AG04449 (cell line): ENCODE measurements at regions of chr1 and their contacts with region 1.

Region 1: GRCh38 chr1:26417111-26417759 is 6.6 kb downstream of the LIN28A start:
- DNase-seq: no peak
- H3K4me3 ChIP-seq: no peak overlapping the region
- CTCF ChIP-seq: peak; percentile 97

Region 2: DNA sequence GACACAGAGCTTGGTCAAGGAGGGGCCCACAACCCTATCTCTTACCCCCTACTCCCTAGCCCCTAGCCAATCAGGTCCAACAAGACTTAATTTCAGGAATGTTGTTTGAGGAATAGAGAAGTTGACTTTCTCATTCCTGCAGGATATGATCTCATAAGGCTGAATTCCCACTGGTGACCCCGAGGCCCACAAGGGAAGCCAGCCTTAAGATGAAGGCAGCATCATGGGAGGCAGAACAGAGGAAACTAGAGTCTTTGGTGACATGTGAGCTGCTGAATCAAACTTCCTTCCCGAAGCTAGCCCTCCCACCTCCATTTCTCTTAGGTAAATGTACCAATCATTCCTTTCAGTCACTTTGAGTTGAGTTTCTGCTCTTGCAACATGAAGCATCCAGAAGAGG is 314.7 kb before region 1 on chr1:
- CTCF ChIA-PET with region 1: interaction called, 11 read pairs
- POLR2A ChIA-PET with region 1: no interaction called
- DNase-seq: no peak
- H3K4me3 ChIP-seq: no peak overlapping the region
- CTCF ChIP-seq: no peak

Region 3: GRCh38 chr1:26279456-26280332 is 137.5 kb before region 1 on chr1 and contains the start of gene SH3BGRL3:
- CTCF ChIA-PET with region 1: interaction called, 34 read pairs
- POLR2A ChIA-PET with region 1: no interaction called
- DNase-seq: no peak
- H3K4me3 ChIP-seq: peak within 1 kb of the TSS; percentile 81
- CTCF ChIP-seq: peak; percentile 75

Region 4: DNA sequence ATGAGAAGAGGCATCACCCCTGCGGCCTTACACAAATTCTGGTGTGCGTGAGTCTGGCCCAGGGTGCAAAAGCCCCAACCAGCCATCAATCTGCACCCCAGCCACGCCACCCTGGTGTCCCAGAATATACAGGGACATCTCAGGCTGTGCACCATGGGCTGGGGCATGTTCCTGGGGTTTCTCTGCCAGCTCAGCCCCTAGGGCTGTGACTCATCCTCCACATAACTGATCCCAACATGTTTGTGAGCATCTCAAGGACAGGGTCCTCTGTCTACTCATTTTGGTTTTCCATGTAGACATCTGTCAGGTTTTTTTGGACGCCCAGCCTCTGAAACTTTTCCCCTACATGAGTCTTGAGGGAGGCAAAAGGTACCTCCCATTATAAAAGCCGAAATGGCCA is 45.2 kb before region 1 on chr1:
- CTCF ChIA-PET with region 1: interaction called, 21 read pairs
- POLR2A ChIA-PET with region 1: no interaction called
- DNase-seq: no peak
- H3K4me3 ChIP-seq: no peak overlapping the region
- CTCF ChIP-seq: no peak

Region 5: DNA sequence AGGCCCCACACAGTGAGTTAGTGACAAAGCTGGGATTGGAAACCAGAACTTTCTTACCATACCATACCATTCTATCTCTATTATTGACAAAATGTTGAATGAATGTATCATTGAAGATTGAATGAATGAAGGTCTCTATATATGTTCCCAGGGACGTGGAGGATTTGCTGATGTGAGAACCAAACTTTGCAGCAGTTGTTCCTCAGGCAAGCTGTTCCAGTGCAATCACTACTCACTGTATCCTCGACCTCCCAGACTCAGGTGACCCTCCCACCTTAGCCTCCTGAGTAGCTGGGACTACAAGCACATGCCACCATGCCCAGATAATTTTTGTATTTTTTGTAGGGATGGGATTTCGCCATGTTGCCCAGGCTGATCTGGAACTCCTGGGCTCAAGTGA is 18.2 kb before region 1 on chr1:
- CTCF ChIA-PET with region 1: interaction called, 90 read pairs
- POLR2A ChIA-PET with region 1: no interaction called
- DNase-seq: no peak
- H3K4me3 ChIP-seq: no peak overlapping the region
- CTCF ChIP-seq: no peak

Region 6: DNA sequence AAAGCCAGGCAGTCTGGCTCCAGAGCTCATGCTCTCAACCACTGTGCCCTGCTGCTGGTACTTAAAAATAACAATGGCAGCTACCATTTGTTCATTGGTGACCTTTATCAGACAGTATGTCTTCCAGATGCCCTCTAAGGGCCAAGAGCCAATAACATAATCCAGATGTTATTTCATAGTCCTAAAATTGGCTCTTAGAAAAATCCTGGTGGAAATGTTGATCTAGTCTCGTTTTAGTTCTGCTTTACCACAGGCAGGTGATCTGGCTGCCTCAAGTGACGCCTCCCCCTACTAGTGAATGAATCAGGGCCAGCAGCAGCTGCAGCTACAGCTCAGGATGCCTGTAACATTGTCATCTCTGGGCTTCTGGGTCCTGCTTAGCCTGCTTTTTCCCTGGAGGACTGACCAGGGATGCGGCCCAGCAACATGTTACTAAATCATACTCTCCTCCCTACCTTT is 42.4 kb after region 1 on chr1:
- CTCF ChIA-PET with region 1: interaction called, 13 read pairs
- POLR2A ChIA-PET with region 1: no interaction called
- DNase-seq: no peak
- H3K4me3 ChIP-seq: no peak overlapping the region
- CTCF ChIP-seq: no peak

Region 7: DNA sequence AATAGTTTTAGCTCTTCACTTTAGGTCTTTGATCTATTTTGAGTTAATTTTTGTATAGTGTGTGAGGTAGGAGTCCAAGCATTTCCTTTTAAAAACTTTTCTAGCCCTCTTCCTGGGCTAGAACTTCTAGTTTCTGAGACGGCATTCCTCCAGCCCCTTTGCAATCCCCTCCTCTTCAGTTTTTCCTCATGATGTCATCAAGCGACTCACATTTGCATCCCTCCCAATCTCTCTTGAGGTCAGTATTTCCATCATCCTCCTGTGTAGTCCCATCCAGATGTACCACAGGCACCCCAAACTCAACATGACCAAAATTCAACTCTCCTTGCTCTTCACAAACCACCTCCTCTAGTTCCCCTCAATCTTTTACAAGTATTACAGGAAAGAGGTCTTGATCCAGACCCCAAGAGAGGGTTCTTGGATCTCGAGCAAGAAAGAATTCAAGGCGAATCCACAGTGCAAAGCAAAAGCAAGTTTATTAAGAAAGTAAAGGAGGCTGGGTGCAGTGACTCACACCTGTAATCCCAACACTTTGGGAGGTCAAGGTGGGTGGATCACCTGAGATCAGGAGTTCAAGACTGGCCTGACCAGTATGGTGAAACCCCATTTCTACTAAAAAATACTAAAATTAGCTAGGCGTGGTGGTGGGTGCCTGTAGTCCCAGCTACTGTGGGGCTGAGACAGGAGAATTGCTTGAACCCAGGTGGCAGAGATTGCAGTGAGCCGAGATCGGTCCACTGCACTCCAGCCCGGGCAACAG is 65.9 kb after region 1 on chr1:
- CTCF ChIA-PET with region 1: no interaction called
- POLR2A ChIA-PET with region 1: no interaction called
- DNase-seq: no peak
- H3K4me3 ChIP-seq: no peak overlapping the region
- CTCF ChIP-seq: no peak